T-cell (primary cell): ENCODE measurements at regions of chr2 and their contacts with region 1.

Region 1: DNA sequence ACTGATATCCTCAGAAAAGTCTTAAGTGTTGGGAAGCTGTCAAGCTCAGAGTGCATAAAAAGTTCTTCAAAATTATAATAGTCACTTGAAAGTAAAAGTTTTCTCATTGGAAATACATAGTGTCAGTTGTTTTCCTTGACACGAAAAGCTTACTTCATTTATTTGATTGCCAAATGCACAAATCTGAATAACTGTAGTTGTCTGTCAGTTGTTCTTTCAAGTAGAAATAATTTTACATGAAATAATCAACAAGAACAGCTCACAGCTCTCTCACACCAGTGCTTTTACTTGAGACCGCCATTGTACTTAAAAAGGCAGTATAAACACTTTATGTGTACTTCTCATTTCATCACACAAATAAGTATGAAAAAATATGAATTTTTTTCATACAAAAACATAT is 163.3 kb upstream of the NXPH2 start:
- DNase-seq: no peak
- ATAC-seq: no peak
- H3K4me3 ChIP-seq: no peak overlapping the region
- H3K4me3 Mint-ChIP-seq: no peak overlapping the region
- H3K27ac ChIP-seq: no peak overlapping the region
- H3K27ac Mint-ChIP-seq: no peak overlapping the region
- H3K4me1 ChIP-seq: no peaks in the 10 kb centered on the region
- H3K4me1 Mint-ChIP-seq: no peaks in the 10 kb centered on the region
- H3K27me3 ChIP-seq: no peaks in the 10 kb centered on the region
- H3K27me3 Mint-ChIP-seq: no peaks in the 10 kb centered on the region

Region 2: DNA sequence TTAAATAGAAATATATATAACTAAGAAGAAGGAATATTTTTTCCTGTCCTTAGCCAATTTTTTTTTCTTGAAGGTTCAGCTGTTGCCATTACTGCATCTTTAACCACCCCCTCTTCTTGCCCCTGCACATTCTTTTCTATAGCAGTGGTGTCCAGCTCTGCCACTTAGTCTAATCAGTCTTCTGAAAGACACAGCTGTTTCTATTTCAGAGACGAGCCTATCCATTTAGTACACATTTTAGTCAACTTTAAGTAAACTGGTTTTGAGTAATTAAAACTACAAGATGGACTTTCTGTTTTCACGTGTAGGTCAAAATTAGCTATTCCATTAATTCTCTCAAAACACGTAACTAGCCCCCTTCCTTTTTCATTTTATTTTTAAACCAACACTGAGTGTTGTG is 420.9 kb before region 1 on chr2:
- CTCF ChIA-PET with region 1: no interaction called
- POLR2A ChIA-PET with region 1: no interaction called
- DNase-seq: no peak
- ATAC-seq: no peak
- H3K4me3 ChIP-seq: no peak overlapping the region
- H3K4me3 Mint-ChIP-seq: no peak overlapping the region
- H3K27ac ChIP-seq: no peak overlapping the region
- H3K27ac Mint-ChIP-seq: no peak overlapping the region
- H3K4me1 ChIP-seq: peaks cover 0 to 2% of the 10 kb centered on the region in 2 experiments
- H3K4me1 Mint-ChIP-seq: peaks cover 27 to 50% (median 30%) of the 10 kb centered on the region in 3 donors
- H3K27me3 ChIP-seq: no peaks in the 10 kb centered on the region
- H3K27me3 Mint-ChIP-seq: no peaks in the 10 kb centered on the region

Region 3: DNA sequence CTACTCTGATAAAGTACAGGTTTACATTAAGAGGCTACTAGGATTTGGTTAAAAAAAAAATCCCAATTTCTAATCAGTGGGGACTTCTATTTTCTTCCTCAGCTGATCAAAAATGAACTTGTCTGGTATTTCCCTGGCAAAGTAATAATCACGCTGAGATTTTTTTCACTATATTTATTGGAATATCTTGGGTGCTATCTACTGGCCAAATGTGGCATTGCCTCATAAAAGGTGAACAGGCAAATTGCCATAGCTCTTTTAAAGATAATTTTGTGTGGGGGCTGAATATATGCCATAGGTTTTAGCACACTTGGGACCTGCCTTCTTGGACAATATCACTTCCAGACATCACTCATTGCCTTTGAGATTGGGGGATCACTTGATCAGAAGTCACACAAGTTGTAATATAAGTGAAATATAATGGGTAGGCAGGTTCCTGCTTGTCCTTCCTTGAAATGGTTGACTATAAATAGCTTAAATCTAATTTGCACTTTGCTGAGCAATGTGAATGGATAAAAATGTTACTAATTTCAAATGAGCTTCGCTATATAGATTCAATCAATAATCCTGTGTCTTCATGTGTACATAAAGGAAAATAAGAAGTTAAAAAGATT is 156.3 kb before region 1 on chr2:
- CTCF ChIA-PET with region 1: no interaction called
- POLR2A ChIA-PET with region 1: no interaction called
- DNase-seq: peak in 1 of 35 experiments; percentile 22
- ATAC-seq: no peak
- H3K4me3 ChIP-seq: no peak overlapping the region
- H3K4me3 Mint-ChIP-seq: no peak overlapping the region
- H3K27ac ChIP-seq: no peak overlapping the region
- H3K27ac Mint-ChIP-seq: no peak overlapping the region
- H3K4me1 ChIP-seq: no peaks in the 10 kb centered on the region
- H3K4me1 Mint-ChIP-seq: no peaks in the 10 kb centered on the region
- H3K27me3 ChIP-seq: peaks cover 0 to 7% of the 10 kb centered on the region in 2 experiments
- H3K27me3 Mint-ChIP-seq: peaks cover 5 to 14% of the 10 kb centered on the region in 2 donors

Region 4: DNA sequence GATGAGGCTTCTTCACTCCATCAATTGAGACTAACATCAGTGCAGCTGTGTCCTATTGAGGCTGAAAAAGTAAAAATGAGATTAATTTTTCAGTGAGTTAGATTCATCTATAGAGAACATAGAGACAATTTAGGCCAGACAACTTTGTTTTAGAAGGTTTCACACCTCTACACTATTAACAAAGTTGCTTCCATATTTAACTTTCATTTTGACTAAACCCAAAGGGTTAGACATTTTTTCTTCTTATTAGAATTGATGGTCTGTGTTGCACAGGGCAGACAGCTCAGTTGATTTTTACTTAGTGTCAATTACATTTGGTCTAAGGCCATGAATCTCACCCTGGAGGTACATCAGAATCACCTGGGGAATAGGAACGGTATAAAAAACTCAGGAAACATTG is 33.0 kb before region 1 on chr2:
- CTCF ChIA-PET with region 1: no interaction called
- POLR2A ChIA-PET with region 1: no interaction called
- DNase-seq: no peak
- ATAC-seq: no peak
- H3K4me3 ChIP-seq: no peak overlapping the region
- H3K4me3 Mint-ChIP-seq: no peak overlapping the region
- H3K27ac ChIP-seq: no peak overlapping the region
- H3K27ac Mint-ChIP-seq: no peak overlapping the region
- H3K4me1 ChIP-seq: no peaks in the 10 kb centered on the region
- H3K4me1 Mint-ChIP-seq: no peaks in the 10 kb centered on the region
- H3K27me3 ChIP-seq: no peaks in the 10 kb centered on the region
- H3K27me3 Mint-ChIP-seq: no peaks in the 10 kb centered on the region

Region 5: DNA sequence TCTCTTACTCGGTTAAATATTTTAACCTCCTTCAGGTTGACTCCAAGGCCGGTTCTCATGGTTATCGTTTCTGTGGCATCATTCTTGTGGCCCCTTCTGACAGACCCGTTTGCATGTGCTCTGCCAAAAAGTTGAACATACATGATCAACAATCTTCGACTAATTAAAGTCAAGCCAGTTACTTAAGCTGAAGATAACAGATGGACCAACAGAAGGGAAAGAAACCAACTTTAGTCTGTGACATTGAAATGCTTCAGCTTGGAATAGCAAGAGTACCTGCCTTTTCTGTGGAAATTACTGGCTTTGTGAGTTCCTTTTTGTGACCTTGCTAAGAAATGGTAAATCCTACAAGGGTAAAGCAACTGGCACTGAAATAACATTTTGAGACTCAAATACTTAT is 1758.3 kb after region 1 on chr2:
- CTCF ChIA-PET with region 1: no interaction called
- POLR2A ChIA-PET with region 1: interaction called in 1 of 2 experiments, 10 read pairs
- DNase-seq: no peak
- ATAC-seq: no peak
- H3K4me3 ChIP-seq: no peak overlapping the region
- H3K4me3 Mint-ChIP-seq: no peak overlapping the region
- H3K27ac ChIP-seq: no peak overlapping the region
- H3K27ac Mint-ChIP-seq: no peak overlapping the region
- H3K4me1 ChIP-seq: no peaks in the 10 kb centered on the region
- H3K4me1 Mint-ChIP-seq: no peaks in the 10 kb centered on the region
- H3K27me3 ChIP-seq: no peaks in the 10 kb centered on the region
- H3K27me3 Mint-ChIP-seq: no peaks in the 10 kb centered on the region